ENCODE measurements at regions of chr3 and their contacts with region 1.

Region 1: GRCh38 chr3:14203521-14204079 is 25.0 kb downstream of the LSM3 start:
- DNase-seq: peak; percentile 76 to 78
- H3K4me3 ChIP-seq: no peak overlapping the region
- H3K4me3 Mint-ChIP-seq: peak overlapping the region; percentile 44
- H3K27ac Mint-ChIP-seq: peak overlapping the region; percentile 89
- H3K4me1 ChIP-seq: peaks cover 77% of the 10 kb centered on the region
- H3K4me1 Mint-ChIP-seq: peaks cover 53% of the 10 kb centered on the region
- H3K27me3 ChIP-seq: no peaks in the 10 kb centered on the region
- H3K27me3 Mint-ChIP-seq: no peaks in the 10 kb centered on the region
- CTCF ChIP-seq: peak; percentile 78 to 83

Region 2: DNA sequence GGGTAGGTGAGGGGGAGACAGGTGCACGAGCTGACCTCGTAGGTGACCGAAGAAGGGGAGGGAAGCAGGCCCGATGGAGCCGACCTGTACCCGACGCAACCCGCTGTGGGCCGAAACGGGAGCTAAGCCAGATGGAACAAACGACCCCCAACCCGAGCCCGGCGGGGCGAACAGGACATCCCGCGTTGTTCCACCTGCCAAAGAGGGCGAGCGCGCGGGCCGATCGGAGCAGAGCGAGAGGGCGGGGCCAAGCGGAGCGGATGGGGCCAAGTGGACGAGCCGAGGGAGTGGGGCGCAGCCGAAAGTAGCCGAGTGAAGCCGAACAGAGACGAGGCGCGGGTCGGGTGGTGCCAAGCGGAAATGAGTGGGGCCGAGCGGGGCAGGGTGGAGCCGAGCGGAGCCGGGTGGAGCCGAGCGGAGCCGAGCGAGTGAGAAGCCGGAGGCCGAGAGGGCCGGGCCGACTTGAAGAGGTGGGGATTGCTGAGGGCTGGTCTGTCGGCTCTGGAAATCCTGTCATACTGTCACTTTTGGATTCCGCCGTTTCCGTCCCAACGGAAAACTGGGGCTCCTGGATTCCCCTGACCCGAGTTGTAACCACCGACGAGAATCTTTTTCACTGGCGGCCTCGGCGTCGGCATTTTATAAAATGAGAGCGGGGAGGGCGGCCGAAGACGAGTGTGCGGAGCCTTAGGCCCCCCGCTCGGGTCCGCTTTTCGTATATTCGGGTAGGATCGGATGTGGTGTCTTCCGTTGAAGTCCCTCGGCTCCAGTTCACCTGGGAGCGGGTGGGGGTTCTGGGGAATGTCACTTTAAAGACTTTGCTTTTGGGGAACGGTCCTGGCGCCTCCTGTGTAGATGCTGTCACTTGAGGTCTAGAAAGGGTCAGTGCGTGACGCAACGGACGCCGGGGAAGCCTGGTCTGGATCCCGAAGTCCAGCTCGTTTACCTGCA is 308.2 kb before region 1 on chr3:
- CTCF ChIA-PET with region 1: interaction called, 10 read pairs
- POLR2A ChIA-PET with region 1: no interaction called
- intact Hi-C with region 1: loop called (anchors 1 kb)
- DNase-seq: peak; percentile 93 to 95
- H3K4me3 ChIP-seq: peak overlapping the region; percentile 53
- H3K4me3 Mint-ChIP-seq: peak overlapping the region; percentile 85
- H3K27ac Mint-ChIP-seq: peak overlapping the region; percentile 54
- H3K4me1 ChIP-seq: no peaks in the 10 kb centered on the region
- H3K4me1 Mint-ChIP-seq: no peaks in the 10 kb centered on the region
- H3K27me3 ChIP-seq: no peaks in the 10 kb centered on the region
- H3K27me3 Mint-ChIP-seq: no peaks in the 10 kb centered on the region
- CTCF ChIP-seq: no peak

Region 3: GRCh38 chr3:14222900-14223594 is 19.4 kb after region 1 on chr3:
- CTCF ChIA-PET with region 1: interaction called, 21 read pairs
- POLR2A ChIA-PET with region 1: interaction called, 10 read pairs
- intact Hi-C with region 1: loop called (anchors 1 kb)
- DNase-seq: no peak
- H3K4me3 ChIP-seq: no peak overlapping the region
- H3K4me3 Mint-ChIP-seq: peak overlapping the region; percentile 15
- H3K27ac Mint-ChIP-seq: peak overlapping the region; percentile 96
- H3K4me1 ChIP-seq: peaks cover 50% of the 10 kb centered on the region
- H3K4me1 Mint-ChIP-seq: peaks cover 47% of the 10 kb centered on the region
- H3K27me3 ChIP-seq: no peaks in the 10 kb centered on the region
- H3K27me3 Mint-ChIP-seq: no peaks in the 10 kb centered on the region
- CTCF ChIP-seq: no peak

Region 4: GRCh38 chr3:14295801-14296200 is 92.2 kb after region 1 on chr3:
- CTCF ChIA-PET with region 1: interaction called, 22 read pairs
- POLR2A ChIA-PET with region 1: interaction called, 4 read pairs
- intact Hi-C with region 1: no loop called
- DNase-seq: no peak
- H3K4me3 ChIP-seq: peak overlapping the region; percentile 21
- H3K4me3 Mint-ChIP-seq: peak overlapping the region; percentile 64
- H3K27ac Mint-ChIP-seq: peak overlapping the region; percentile 97
- H3K4me1 ChIP-seq: peaks cover 64% of the 10 kb centered on the region
- H3K4me1 Mint-ChIP-seq: peaks cover 31% of the 10 kb centered on the region
- H3K27me3 ChIP-seq: no peaks in the 10 kb centered on the region
- H3K27me3 Mint-ChIP-seq: no peaks in the 10 kb centered on the region
- CTCF ChIP-seq: no peak

Region 5: GRCh38 chr3:14402304-14402811 is 198.8 kb after region 1 on chr3 and contains the start of gene SLC6A6:
- CTCF ChIA-PET with region 1: interaction called, 11 read pairs
- POLR2A ChIA-PET with region 1: interaction called, 4 read pairs
- intact Hi-C with region 1: loop called (anchors 1 kb)
- DNase-seq: peak; percentile 95 to 96
- H3K4me3 ChIP-seq: peak within 1 kb of the TSS; percentile 50
- H3K4me3 Mint-ChIP-seq: peak within 1 kb of the TSS; percentile 100
- H3K27ac Mint-ChIP-seq: peak within 1 kb of the TSS; percentile 97
- H3K4me1 ChIP-seq: peaks cover 10% of the 10 kb centered on the region; the same call in 1 of the 2 replicates
- H3K4me1 Mint-ChIP-seq: peaks cover 10% of the 10 kb centered on the region
- H3K27me3 ChIP-seq: no peaks in the 10 kb centered on the region
- H3K27me3 Mint-ChIP-seq: no peaks in the 10 kb centered on the region
- CTCF ChIP-seq: peak; percentile 50 to 75
- total RNA-seq, gene SLC6A6: 49.6 and 55.3 TPM in 2 replicates

Region 6: GRCh38 chr3:14467814-14468620 is 264.4 kb after region 1 on chr3:
- CTCF ChIA-PET with region 1: interaction called, 24 read pairs
- POLR2A ChIA-PET with region 1: no interaction called
- intact Hi-C with region 1: loop called (anchors 1 kb)
- DNase-seq: peak in 1 of 2 experiments; percentile 50
- H3K4me3 ChIP-seq: no peak overlapping the region
- H3K4me3 Mint-ChIP-seq: no peak overlapping the region
- H3K27ac Mint-ChIP-seq: no peak overlapping the region
- H3K4me1 ChIP-seq: 0 out of 2 replicates have a peak, but pooled peaks cover 5% of the 10 kb centered on the region
- H3K4me1 Mint-ChIP-seq: no peaks in the 10 kb centered on the region
- H3K27me3 ChIP-seq: no peaks in the 10 kb centered on the region
- H3K27me3 Mint-ChIP-seq: no peaks in the 10 kb centered on the region
- CTCF ChIP-seq: peak; percentile 73 to 81

Measured in Caco-2 (cell line).